Activated CD4-positive, alpha-beta T cell treated with anti-CD3 and anti-CD28 coated beads, Interleukin-2, amount 10 ng/mL, durations not matched to agents 24 days and 14 days (primary cell): ENCODE measurements at regions of chr4 and their contacts with region 1.

Region 1: DNA sequence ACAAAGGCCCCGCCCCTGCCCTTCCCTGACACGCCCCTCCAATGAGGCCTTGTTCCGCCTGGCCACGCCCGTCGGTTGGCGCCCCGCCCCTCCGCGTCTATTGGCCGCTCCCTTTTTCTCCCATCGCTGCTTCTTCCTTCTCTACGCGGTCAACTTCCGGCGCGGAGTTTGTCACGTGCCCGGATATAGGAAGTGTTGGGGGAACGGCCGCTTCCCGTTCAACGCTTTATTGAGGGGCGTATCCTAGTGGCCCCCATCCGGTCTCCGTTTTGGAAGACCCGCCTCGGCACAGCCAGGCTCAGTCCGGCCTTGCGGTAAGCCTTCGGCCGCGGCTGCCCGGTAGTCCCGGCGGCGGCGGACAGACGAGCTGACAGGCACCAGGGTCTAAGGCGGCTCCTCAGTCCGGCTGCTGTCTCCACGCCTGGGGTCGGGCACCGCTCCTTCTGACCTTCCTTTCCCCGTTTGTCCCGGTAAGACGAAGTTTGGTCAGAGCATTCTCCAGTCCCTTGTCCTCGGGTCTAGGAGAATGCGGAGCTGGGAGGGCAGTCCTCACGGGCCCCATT is at the start of gene EXOC1:
- DNase-seq: peak; percentile 99
- H3K4me3 Mint-ChIP-seq: peak within 1 kb of the TSS; percentile 38
- H3K27ac Mint-ChIP-seq: peak within 1 kb of the TSS; percentile 90
- H3K4me1 Mint-ChIP-seq: peaks cover 20% of the 10 kb centered on the region
- H3K27me3 Mint-ChIP-seq: no peaks in the 10 kb centered on the region
- total RNA-seq, gene EXOC1: 20.8 and 21.5 TPM in 2 replicates

Region 2: GRCh38 chr4:55336136-55337034 is 517.2 kb before region 1 on chr4:
- intact Hi-C with region 1: loop called (anchors 10 kb)
- DNase-seq: peak; percentile 52
- H3K4me3 Mint-ChIP-seq: peak overlapping the region; percentile 26
- H3K27ac Mint-ChIP-seq: peak overlapping the region; percentile 86
- H3K4me1 Mint-ChIP-seq: peaks cover 20% of the 10 kb centered on the region
- H3K27me3 Mint-ChIP-seq: no peaks in the 10 kb centered on the region

Region 3: GRCh38 chr4:55546756-55547465 is 306.7 kb before region 1 on chr4 and contains the start of gene CLOCK:
- intact Hi-C with region 1: loop called (anchors 2 kb)
- DNase-seq: peak; percentile 95
- H3K4me3 Mint-ChIP-seq: peak within 1 kb of the TSS; percentile 84
- H3K27ac Mint-ChIP-seq: peak within 1 kb of the TSS; percentile 88
- H3K4me1 Mint-ChIP-seq: peaks cover 25% of the 10 kb centered on the region
- H3K27me3 Mint-ChIP-seq: peaks cover 30% of the 10 kb centered on the region
- total RNA-seq, gene CLOCK: 9.8 and 10.8 TPM in 2 replicates

Region 4: GRCh38 chr4:55866973-55867574 is 13.5 kb after region 1 on chr4:
- intact Hi-C with region 1: loop called (anchors 2 kb)
- DNase-seq: peak; percentile 69
- H3K4me3 Mint-ChIP-seq: no peak overlapping the region
- H3K27ac Mint-ChIP-seq: no peak overlapping the region
- H3K4me1 Mint-ChIP-seq: peaks cover 19% of the 10 kb centered on the region
- H3K27me3 Mint-ChIP-seq: no peaks in the 10 kb centered on the region

Region 5: DNA sequence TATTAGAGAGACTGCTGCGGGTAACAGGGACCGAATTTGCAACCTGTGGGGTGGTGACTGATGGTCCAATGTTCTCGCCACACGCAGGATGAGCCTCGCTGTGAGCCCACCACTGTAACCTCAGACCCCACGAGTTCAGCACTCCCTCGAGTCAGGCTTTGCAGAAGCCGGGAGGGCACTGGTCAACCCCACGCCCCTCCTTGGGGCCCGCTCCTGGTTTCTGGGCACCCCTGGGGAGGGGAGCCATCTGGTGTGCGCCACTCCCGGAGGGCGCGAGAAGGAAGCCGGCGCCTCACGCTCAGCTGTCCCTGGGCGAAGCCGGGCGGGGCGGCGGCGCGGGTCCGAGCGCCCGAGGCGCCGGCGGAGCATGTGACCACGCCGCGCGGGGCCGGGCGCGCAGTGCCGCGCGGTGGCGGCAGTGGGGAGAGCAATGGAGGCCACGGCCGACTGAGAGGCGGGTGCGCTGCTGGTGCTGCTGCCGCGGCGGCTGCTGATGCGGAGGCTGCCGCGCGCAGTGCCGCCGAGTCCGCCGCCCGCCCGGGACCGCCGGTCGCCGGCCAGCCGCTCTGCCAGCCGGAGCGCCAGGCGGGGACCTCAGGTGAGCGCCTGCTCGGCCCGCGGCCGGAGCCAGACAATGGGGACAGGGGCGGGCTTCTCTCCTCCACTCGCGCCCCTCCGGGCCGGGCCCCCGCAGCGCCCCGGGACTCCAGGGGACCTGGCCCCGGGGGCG is 195.3 kb after region 1 on chr4:
- intact Hi-C with region 1: loop called (anchors 1 kb)
- DNase-seq: peak; percentile 89
- H3K4me3 Mint-ChIP-seq: peak overlapping the region; percentile 80
- H3K27ac Mint-ChIP-seq: no peak overlapping the region
- H3K4me1 Mint-ChIP-seq: peaks cover 13% of the 10 kb centered on the region
- H3K27me3 Mint-ChIP-seq: peaks cover 54% of the 10 kb centered on the region

Region 6: GRCh38 chr4:56757821-56758411 is 904.4 kb after region 1 on chr4:
- intact Hi-C with region 1: loop called (anchors 10 kb)
- DNase-seq: peak; percentile 91
- H3K4me3 Mint-ChIP-seq: peak overlapping the region; percentile 80
- H3K27ac Mint-ChIP-seq: peak overlapping the region; percentile 98
- H3K4me1 Mint-ChIP-seq: peaks cover 47% of the 10 kb centered on the region
- H3K27me3 Mint-ChIP-seq: peaks cover 5% of the 10 kb centered on the region

Region 7: DNA sequence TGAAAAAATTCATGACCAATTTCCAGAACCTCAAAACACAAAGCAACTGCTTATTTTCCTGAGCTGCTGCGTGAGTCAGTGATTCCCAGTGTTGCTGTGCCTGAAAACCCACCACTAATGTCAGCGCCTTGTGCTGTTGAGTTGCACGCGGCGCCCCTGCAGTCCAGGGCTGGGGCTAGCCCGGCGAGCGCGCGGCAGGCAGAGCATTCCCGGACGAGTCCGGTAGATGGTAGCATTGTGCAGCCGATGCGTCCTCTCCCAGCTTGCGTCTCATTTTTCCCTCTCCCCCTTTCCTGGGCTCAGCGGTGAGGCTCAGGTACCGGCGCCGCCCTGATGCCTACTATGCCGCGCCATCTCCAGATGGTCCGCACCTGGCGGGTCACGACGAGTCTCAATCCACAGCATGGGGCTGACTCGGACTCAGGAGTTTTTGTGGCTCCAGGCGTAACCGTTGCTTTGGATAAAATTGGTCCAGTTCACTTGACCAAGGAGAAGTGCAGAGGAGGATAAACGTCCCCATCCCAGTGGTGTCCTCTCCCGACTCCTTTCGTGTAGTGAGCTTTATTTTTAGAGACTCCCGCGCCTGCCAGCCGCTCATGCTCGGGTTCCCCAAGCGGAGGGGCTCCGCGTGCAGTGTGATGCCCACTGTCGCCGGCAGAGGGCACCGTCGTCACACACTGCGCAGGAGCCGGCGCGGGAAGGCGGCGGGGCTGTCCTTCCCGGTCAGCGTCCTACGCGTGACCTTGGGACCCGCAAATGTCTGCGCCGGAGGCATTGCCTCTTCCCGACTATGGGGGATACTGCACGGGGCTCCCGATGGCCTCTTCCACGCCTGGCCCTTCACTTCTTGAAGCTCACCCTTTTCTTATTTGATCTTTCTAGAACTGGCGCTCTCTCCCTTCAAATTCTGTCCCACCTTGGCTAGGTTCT is 1310.2 kb after region 1 on chr4:
- intact Hi-C with region 1: no loop called
- DNase-seq: peak; percentile 93
- H3K4me3 Mint-ChIP-seq: peak overlapping the region; percentile 90
- H3K27ac Mint-ChIP-seq: peak overlapping the region; percentile 71
- H3K4me1 Mint-ChIP-seq: peaks cover 13% of the 10 kb centered on the region
- H3K27me3 Mint-ChIP-seq: peaks cover 24% of the 10 kb centered on the region